ENCODE measurements at regions of chr5 and their contacts with region 1.

Region 1: DNA sequence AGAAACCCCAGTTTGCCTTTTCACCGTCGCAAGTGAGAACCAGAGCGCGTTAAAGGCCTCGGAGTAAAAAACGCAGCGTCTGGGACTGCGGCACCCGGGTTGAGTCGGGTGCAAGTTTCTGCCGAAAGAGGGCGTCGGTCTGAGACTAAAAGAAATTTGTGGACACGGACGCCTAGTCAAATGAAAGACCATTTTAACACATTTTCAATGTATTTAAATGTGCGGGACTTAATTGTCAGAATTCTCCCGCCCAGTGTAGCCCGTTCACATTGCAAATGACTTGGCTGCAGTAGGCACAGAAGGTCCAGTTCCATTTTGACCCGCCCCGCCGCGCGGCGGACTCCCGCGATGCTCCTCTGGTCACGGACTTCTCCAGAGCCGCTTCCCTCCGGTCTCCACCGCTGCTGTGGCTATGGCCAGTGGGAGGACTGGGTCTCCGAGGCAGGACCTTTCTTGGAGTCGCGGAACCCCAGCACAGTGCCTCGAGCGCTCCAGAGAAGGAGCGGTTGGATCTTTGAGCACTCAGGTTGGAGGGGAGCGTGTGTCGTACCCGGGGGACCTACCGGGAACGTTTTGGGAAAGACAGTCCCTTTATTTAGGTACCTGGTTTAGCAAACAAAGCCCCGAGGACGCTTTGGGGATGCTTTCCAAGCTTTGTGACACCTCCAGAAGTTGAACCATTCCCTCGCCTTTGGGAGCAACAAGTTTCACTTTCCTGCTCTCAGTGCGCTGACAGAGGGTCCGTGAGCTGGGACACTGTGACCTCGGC is 1.2 kb upstream of the NPR3 start:
- DNase-seq: peak; percentile 41
- ATAC-seq: peak; percentile 90
- H3K4me3 ChIP-seq: peak overlapping the region; percentile 36 to 72 (median 49)
- H3K27ac ChIP-seq: no peak overlapping the region
- H3K4me1 ChIP-seq: no peaks in the 10 kb centered on the region
- H3K27me3 ChIP-seq: peaks cover 2 to 5% of the 10 kb centered on the region in 2 experiments; a peak in 4 of 5 replicates
- CTCF ChIP-seq: peak; percentile 72
- EP300 ChIP-seq: no peak
- POLR2A ChIP-seq: no peak
- RAD21 ChIP-seq: no peak

Region 2: GRCh38 chr5:32794086-32794485 is 84.1 kb after region 1 on chr5:
- CTCF ChIA-PET with region 1: no interaction called
- POLR2A ChIA-PET with region 1: no interaction called
- in situ Hi-C with region 1: no loop called
- intact Hi-C with region 1: loop called (anchors 2 kb)
- DNase-seq: peak; percentile 13
- ATAC-seq: peak; percentile 91
- H3K4me3 ChIP-seq: no peak overlapping the region
- H3K27ac ChIP-seq: no peak overlapping the region
- H3K4me1 ChIP-seq: no peaks in the 10 kb centered on the region
- H3K27me3 ChIP-seq: no peaks in the 10 kb centered on the region
- CTCF ChIP-seq: peak; percentile 41
- EP300 ChIP-seq: no peak
- POLR2A ChIP-seq: no peak
- RAD21 ChIP-seq: no peak

Region 3: GRCh38 chr5:32916648-32917047 is 206.7 kb after region 1 on chr5:
- CTCF ChIA-PET with region 1: no interaction called
- POLR2A ChIA-PET with region 1: no interaction called
- in situ Hi-C with region 1: no loop called
- intact Hi-C with region 1: loop called (anchors 1 kb)
- DNase-seq: peak; percentile 33
- ATAC-seq: peak; percentile 73
- H3K4me3 ChIP-seq: no peak overlapping the region
- H3K27ac ChIP-seq: no peak overlapping the region
- H3K4me1 ChIP-seq: no peaks in the 10 kb centered on the region
- H3K27me3 ChIP-seq: no peaks in the 10 kb centered on the region
- CTCF ChIP-seq: peak; percentile 70
- EP300 ChIP-seq: no peak
- POLR2A ChIP-seq: no peak
- RAD21 ChIP-seq: 0 out of 2 replicates have a peak, but pooled peaks have one; percentile 29

Region 4: GRCh38 chr5:32990593-32991420 is 280.8 kb after region 1 on chr5:
- CTCF ChIA-PET with region 1: no interaction called
- POLR2A ChIA-PET with region 1: no interaction called
- in situ Hi-C with region 1: no loop called
- intact Hi-C with region 1: loop called (anchors 5 kb)
- DNase-seq: no peak
- ATAC-seq: no peak
- H3K4me3 ChIP-seq: no peak overlapping the region
- H3K27ac ChIP-seq: no peak overlapping the region
- H3K4me1 ChIP-seq: no peaks in the 10 kb centered on the region
- H3K27me3 ChIP-seq: no peaks in the 10 kb centered on the region; a peak in 1 of 5 replicates
- CTCF ChIP-seq: no peak
- EP300 ChIP-seq: no peak
- POLR2A ChIP-seq: no peak
- RAD21 ChIP-seq: no peak

Region 5: GRCh38 chr5:33299621-33300208 is 589.8 kb after region 1 on chr5:
- CTCF ChIA-PET with region 1: no interaction called
- POLR2A ChIA-PET with region 1: no interaction called
- in situ Hi-C with region 1: no loop called
- intact Hi-C with region 1: loop called (anchors 1 kb)
- DNase-seq: no peak
- ATAC-seq: no peak; the same call in 2 of the 3 replicates
- H3K4me3 ChIP-seq: no peak overlapping the region
- H3K27ac ChIP-seq: no peak overlapping the region
- H3K4me1 ChIP-seq: peaks cover 22% of the 10 kb centered on the region
- H3K27me3 ChIP-seq: no peaks in the 10 kb centered on the region
- CTCF ChIP-seq: peak; percentile 49
- EP300 ChIP-seq: no peak
- POLR2A ChIP-seq: no peak
- RAD21 ChIP-seq: no peak

Region 6: GRCh38 chr5:33440482-33441240 is 730.7 kb after region 1 on chr5 and contains the start of gene TARS1:
- CTCF ChIA-PET with region 1: no interaction called
- POLR2A ChIA-PET with region 1: no interaction called
- in situ Hi-C with region 1: no loop called
- intact Hi-C with region 1: no loop called
- DNase-seq: peak; percentile 100
- ATAC-seq: peak; percentile 94
- H3K4me3 ChIP-seq: peak within 1 kb of the TSS; percentile 91 to 98 (median 96)
- H3K27ac ChIP-seq: peak within 1 kb of the TSS; percentile 88
- H3K4me1 ChIP-seq: peaks cover 40% of the 10 kb centered on the region
- H3K27me3 ChIP-seq: no peaks in the 10 kb centered on the region; a peak in 1 of 5 replicates
- CTCF ChIP-seq: no peak
- EP300 ChIP-seq: 0 out of 4 replicates have a peak, but pooled peaks have one; percentile 37 to 47
- POLR2A ChIP-seq: peak; percentile 83 to 86
- RAD21 ChIP-seq: peak; percentile 40; the same call in 1 of the 2 replicates
- total RNA-seq, gene TARS1: 184 and 297 TPM in 2 replicates